Activated CD8-positive, alpha-beta T cell treated with anti-CD3 and anti-CD28 coated beads for 36 hours (primary cell): ENCODE measurements at regions of chr5 and their contacts with region 1.

Region 1: DNA sequence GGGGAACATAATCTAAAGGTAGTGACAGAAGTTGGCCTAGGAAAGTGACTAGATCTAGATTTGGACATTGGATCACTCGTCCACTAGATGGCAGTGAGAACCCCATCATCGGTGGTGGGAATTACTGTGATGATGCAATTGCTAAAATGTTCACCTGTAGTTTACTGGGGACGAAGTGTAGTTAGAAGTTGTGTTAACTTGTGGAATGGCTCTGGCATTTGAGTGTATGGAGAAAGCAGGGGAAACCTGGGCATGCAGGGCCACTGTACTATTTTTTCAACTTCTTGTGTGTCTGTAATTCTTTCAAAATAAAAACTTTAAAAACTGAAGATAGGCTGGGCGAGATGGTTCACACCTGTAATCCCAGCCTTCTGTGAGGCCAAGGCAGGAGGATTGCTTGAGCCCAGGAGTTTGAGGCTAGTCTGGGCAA is 75.5 kb downstream of the PHAX start:
- DNase-seq: peak; percentile 74
- ATAC-seq: peak; percentile 86
- H3K4me3 Mint-ChIP-seq: no peak overlapping the region
- H3K27ac Mint-ChIP-seq: peak overlapping the region; percentile 53
- H3K4me1 Mint-ChIP-seq: peaks cover 3% of the 10 kb centered on the region
- H3K27me3 Mint-ChIP-seq: no peaks in the 10 kb centered on the region
- CTCF ChIP-seq: peak; percentile 83

Region 2: GRCh38 chr5:126686451-126687126 is 10.4 kb after region 1 on chr5:
- CTCF ChIA-PET with region 1: interaction called, 26 read pairs
- POLR2A ChIA-PET with region 1: interaction called, 3 read pairs
- intact Hi-C with region 1: no loop called
- DNase-seq: no peak
- ATAC-seq: no peak
- H3K4me3 Mint-ChIP-seq: no peak overlapping the region
- H3K27ac Mint-ChIP-seq: no peak overlapping the region
- H3K4me1 Mint-ChIP-seq: peaks cover 24% of the 10 kb centered on the region
- H3K27me3 Mint-ChIP-seq: no peaks in the 10 kb centered on the region
- CTCF ChIP-seq: no peak

Region 3: DNA sequence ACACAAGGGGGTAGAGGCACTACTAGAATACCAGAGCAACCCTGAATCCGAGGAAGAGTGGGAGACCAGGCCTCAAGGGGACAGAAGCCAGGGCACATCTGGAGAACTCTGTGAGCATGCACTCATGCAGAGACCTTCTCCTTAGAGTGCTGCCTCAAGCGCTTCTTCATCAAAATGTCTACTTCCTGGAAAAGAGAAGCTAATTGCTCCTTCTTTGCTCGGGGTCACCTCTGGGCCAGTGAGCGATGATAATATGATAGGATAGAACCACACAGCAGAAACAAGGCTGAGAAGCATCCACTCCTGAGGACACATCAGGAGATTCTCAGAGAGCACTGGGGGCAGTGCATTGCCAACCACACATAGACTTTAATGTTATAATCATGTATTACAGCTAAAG is 77.0 kb after region 1 on chr5:
- CTCF ChIA-PET with region 1: no interaction called
- POLR2A ChIA-PET with region 1: no interaction called
- intact Hi-C with region 1: no loop called
- DNase-seq: no peak
- ATAC-seq: no peak
- H3K4me3 Mint-ChIP-seq: no peak overlapping the region
- H3K27ac Mint-ChIP-seq: no peak overlapping the region
- H3K4me1 Mint-ChIP-seq: peaks cover 20% of the 10 kb centered on the region
- H3K27me3 Mint-ChIP-seq: no peaks in the 10 kb centered on the region
- CTCF ChIP-seq: no peak

Region 4: GRCh38 chr5:126801992-126802294 is 125.7 kb after region 1 on chr5:
- CTCF ChIA-PET with region 1: interaction called, 23 read pairs
- POLR2A ChIA-PET with region 1: no interaction called
- intact Hi-C with region 1: no loop called
- DNase-seq: no peak
- ATAC-seq: no peak
- H3K4me3 Mint-ChIP-seq: no peak overlapping the region
- H3K27ac Mint-ChIP-seq: no peak overlapping the region
- H3K4me1 Mint-ChIP-seq: peaks cover 41% of the 10 kb centered on the region
- H3K27me3 Mint-ChIP-seq: no peaks in the 10 kb centered on the region
- CTCF ChIP-seq: no peak

Region 5: DNA sequence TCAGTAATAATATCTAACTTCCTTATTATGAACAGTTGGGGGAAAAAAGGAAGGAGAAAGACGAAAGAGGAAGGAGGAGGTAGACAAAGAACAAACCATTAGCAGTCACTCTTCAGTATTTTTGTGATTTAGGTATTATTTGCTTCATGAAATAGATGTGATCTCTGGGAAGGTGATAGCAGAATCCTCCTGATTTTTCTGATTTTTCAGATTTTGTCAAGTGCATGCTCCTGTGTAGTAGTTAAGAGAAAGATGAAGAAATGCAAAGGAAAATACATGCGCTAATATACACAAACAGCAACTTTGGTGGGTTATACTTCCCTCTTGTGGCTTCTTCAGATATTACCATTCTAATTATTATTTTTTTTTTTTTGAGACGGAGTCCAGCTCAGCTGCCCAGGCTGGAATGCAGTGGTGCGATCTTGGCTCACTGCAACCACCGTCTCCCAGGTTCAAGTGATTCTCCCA is 132.3 kb after region 1 on chr5:
- CTCF ChIA-PET with region 1: interaction called, 19 read pairs
- POLR2A ChIA-PET with region 1: no interaction called
- intact Hi-C with region 1: no loop called
- DNase-seq: no peak
- ATAC-seq: no peak
- H3K4me3 Mint-ChIP-seq: no peak overlapping the region
- H3K27ac Mint-ChIP-seq: no peak overlapping the region
- H3K4me1 Mint-ChIP-seq: peaks cover 36% of the 10 kb centered on the region
- H3K27me3 Mint-ChIP-seq: no peaks in the 10 kb centered on the region
- CTCF ChIP-seq: peak; percentile 39